Naive thymus-derived CD4-positive, alpha-beta T cell (primary cell): ENCODE measurements at regions of chr17 and their contacts with region 1.

Region 1: GRCh38 chr17:18038861-18039534 is at the starts of genes ATPAF2 and GID4:
- DNase-seq: peak; percentile 99 to 100 (median 100)
- ATAC-seq: peak; percentile 96
- H3K4me3 ChIP-seq: peak within 1 kb of the TSS; percentile 79
- H3K4me3 Mint-ChIP-seq: peak within 1 kb of the TSS; percentile 88 to 100 (median 98)
- H3K27ac ChIP-seq: peak within 1 kb of the TSS; percentile 88
- H3K27ac Mint-ChIP-seq: peak within 1 kb of the TSS; percentile 87 to 99 (median 97)
- H3K4me1 ChIP-seq: peaks cover 23 to 30% of the 10 kb centered on the region in 2 donors
- H3K4me1 Mint-ChIP-seq: peaks cover 42 to 70% (median 53%) of the 10 kb centered on the region in 7 donors
- H3K27me3 ChIP-seq: no peaks in the 10 kb centered on the region
- H3K27me3 Mint-ChIP-seq: no peaks in the 10 kb centered on the region
- total RNA-seq, gene ATPAF2: 26.3 to 36.7 (median 32.5) TPM
- total RNA-seq, gene GID4: 6.0 to 11.4 (median 10.0) TPM

Region 2: DNA sequence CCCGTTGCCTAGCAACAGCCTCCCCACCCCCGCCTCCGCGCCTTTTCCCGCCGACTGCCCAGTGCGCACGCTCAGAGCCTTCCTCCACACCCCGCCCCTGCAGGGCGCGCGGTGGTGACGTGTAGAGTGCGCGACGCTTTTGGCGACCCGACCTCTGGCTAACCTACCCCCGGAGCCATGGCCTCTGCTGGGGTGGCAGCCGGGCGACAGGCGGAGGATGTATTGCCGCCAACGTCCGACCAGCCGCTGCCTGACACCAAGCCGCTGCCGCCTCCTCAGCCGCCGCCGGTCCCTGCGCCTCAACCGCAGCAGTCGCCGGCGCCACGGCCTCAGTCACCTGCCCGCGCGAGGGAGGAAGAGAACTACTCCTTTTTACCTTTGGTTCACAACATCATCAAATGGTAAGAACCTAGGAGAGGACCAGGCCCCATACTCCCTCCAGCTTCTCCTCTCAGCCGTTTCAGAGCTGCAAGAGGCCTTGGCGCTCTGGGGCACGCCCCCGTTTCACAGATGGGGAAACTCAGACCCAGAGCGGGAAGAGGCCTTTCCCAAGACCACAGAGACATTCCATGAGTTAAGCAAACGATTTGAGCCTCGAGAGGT is 562.0 kb before region 1 on chr17 and contains the start of gene MED9:
- CTCF ChIA-PET with region 1: no interaction called
- POLR2A ChIA-PET with region 1: no interaction called
- intact Hi-C with region 1: loop called in 1 of 2 experiments (anchors 1 kb)
- DNase-seq: peak; percentile 90 to 98 (median 94)
- ATAC-seq: peak; percentile 100
- H3K4me3 ChIP-seq: peak within 1 kb of the TSS; percentile 98
- H3K4me3 Mint-ChIP-seq: peak within 1 kb of the TSS; percentile 85 to 92 (median 92)
- H3K27ac ChIP-seq: peak within 1 kb of the TSS; percentile 87
- H3K27ac Mint-ChIP-seq: peak within 1 kb of the TSS; percentile 72 to 95 (median 92)
- H3K4me1 ChIP-seq: peaks cover 10 to 29% of the 10 kb centered on the region in 2 donors
- H3K4me1 Mint-ChIP-seq: peaks cover 20 to 58% (median 49%) of the 10 kb centered on the region in 7 donors
- H3K27me3 ChIP-seq: no peaks in the 10 kb centered on the region
- H3K27me3 Mint-ChIP-seq: peaks cover 0 to 11% (median 0%) of the 10 kb centered on the region in 5 donors
- total RNA-seq, gene MED9: 14.0 to 24.1 (median 17.2) TPM

Region 3: DNA sequence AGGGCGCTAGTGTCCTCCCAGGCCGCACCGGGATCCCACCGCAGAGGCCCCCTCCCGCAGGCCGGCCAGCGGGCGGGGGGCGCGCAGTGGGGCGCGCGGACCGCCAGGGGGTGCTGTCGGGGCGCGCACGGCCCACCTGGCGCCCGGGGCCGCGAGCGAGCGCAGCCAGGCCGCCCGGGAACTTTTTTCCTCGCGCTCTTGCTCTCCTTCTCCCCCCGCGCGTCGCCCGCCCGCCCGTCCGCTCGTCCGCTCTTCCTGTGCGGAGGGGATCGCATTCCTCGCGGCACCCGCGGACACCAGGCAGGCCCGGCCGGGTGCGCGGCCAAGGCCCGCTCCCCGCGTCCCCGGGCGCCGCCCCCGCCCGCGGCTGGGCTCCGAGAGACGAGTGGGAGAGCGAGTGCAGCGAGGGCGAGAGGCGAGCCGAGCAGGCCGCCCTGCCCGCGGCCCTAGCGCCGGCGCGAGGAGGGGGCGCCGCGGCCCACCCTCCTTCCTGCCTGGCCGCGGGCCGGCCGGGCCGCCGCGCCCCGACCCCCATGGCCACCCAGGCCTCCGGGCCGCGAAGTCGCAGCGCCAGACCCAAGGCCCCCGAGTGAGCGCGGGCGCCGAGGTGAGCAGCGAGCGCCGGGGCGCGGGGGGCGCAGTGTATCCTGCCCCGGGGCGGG is 357.7 kb before region 1 on chr17 and contains the start of gene RAI1:
- CTCF ChIA-PET with region 1: interaction called, 8 read pairs
- POLR2A ChIA-PET with region 1: interaction called, 3 read pairs
- intact Hi-C with region 1: loop called in 1 of 2 experiments (anchors 1 kb)
- DNase-seq: peak; percentile 64 to 87 (median 79)
- ATAC-seq: peak; percentile 82
- H3K4me3 ChIP-seq: peak within 1 kb of the TSS; percentile 62
- H3K4me3 Mint-ChIP-seq: peak within 1 kb of the TSS; percentile 84 to 92 (median 89)
- H3K27ac ChIP-seq: peak within 1 kb of the TSS; percentile 93
- H3K27ac Mint-ChIP-seq: peak within 1 kb of the TSS in 7 of 9 donors; percentile 59 to 90 (median 77)
- H3K4me1 ChIP-seq: peaks cover 7 to 17% of the 10 kb centered on the region in 2 donors
- H3K4me1 Mint-ChIP-seq: peaks cover 14 to 42% (median 37%) of the 10 kb centered on the region in 7 donors
- H3K27me3 ChIP-seq: no peaks in the 10 kb centered on the region
- H3K27me3 Mint-ChIP-seq: peaks cover 0 to 16% (median 0%) of the 10 kb centered on the region in 5 donors
- total RNA-seq, gene RAI1: 20.1 to 46.2 (median 23.6) TPM

Region 4: DNA sequence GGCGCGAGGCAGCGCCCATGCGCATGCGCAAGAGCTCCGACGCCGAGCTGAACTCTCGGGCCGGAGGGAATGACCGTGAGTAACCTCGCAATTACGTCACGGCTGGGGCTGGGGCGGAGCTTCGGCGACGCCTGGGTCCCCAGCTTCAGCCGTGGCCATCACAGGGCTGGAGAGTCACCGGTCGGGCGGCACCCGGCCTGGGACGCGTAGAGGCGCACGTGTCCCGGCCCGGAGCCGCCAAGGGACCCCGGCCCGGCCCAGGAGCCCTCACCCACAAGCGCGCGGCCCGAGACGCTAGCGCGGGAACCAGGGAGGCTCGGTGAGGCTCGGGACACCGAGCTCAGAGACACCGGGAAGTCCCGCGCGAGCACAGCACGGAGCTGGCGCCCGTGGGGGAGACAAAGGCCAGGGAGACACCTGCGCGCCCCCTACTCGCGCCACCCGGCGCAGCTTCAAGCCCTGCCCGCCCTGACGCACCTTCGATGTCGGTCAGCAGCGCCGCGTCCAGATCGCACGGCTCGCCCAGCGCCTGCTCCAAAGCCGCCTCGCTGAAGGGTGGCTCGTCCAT is 202.7 kb before region 1 on chr17:
- CTCF ChIA-PET with region 1: no interaction called
- POLR2A ChIA-PET with region 1: interaction called, 3 read pairs
- intact Hi-C with region 1: loop called in 1 of 2 experiments (anchors 1 kb)
- DNase-seq: peak; percentile 93 to 99 (median 97)
- ATAC-seq: peak; percentile 85
- H3K4me3 ChIP-seq: peak overlapping the region; percentile 86
- H3K4me3 Mint-ChIP-seq: peak overlapping the region; percentile 85 to 95 (median 90)
- H3K27ac ChIP-seq: peak overlapping the region; percentile 99
- H3K27ac Mint-ChIP-seq: peak overlapping the region; percentile 94 to 99 (median 98)
- H3K4me1 ChIP-seq: peaks cover 18 to 60% of the 10 kb centered on the region in 2 donors
- H3K4me1 Mint-ChIP-seq: peaks cover 46 to 79% (median 75%) of the 10 kb centered on the region in 7 donors
- H3K27me3 ChIP-seq: no peaks in the 10 kb centered on the region
- H3K27me3 Mint-ChIP-seq: no peaks in the 10 kb centered on the region

Region 5: DNA sequence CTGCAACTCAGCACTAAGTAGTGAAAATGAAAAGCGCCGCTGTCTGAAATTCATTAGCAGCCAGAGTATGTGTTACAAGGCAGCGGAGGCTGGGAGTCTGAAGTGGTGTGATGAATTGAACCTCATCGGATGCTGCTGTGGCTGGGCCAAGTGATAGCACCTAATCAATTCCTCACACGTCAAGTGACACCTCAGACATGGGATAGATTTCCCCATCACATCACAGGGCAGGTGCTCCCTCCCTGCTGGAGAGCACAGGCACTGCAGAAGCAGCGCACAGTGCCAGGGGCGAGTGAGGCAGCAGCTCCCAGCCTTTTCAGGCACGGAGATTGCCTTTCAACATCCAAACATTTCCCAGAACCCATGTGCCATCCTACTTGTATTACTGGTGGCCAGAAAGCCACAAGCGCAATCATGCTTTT is 34.1 kb before region 1 on chr17:
- CTCF ChIA-PET with region 1: no interaction called
- POLR2A ChIA-PET with region 1: no interaction called
- intact Hi-C with region 1: no loop called
- DNase-seq: no peak
- ATAC-seq: no peak
- H3K4me3 ChIP-seq: no peak overlapping the region
- H3K4me3 Mint-ChIP-seq: no peak overlapping the region
- H3K27ac ChIP-seq: no peak overlapping the region
- H3K27ac Mint-ChIP-seq: no peak overlapping the region
- H3K4me1 ChIP-seq: no peaks in the 10 kb centered on the region
- H3K4me1 Mint-ChIP-seq: peaks cover 0 to 5% (median 0%) of the 10 kb centered on the region in 7 donors
- H3K27me3 ChIP-seq: no peaks in the 10 kb centered on the region
- H3K27me3 Mint-ChIP-seq: no peaks in the 10 kb centered on the region

Region 6: DNA sequence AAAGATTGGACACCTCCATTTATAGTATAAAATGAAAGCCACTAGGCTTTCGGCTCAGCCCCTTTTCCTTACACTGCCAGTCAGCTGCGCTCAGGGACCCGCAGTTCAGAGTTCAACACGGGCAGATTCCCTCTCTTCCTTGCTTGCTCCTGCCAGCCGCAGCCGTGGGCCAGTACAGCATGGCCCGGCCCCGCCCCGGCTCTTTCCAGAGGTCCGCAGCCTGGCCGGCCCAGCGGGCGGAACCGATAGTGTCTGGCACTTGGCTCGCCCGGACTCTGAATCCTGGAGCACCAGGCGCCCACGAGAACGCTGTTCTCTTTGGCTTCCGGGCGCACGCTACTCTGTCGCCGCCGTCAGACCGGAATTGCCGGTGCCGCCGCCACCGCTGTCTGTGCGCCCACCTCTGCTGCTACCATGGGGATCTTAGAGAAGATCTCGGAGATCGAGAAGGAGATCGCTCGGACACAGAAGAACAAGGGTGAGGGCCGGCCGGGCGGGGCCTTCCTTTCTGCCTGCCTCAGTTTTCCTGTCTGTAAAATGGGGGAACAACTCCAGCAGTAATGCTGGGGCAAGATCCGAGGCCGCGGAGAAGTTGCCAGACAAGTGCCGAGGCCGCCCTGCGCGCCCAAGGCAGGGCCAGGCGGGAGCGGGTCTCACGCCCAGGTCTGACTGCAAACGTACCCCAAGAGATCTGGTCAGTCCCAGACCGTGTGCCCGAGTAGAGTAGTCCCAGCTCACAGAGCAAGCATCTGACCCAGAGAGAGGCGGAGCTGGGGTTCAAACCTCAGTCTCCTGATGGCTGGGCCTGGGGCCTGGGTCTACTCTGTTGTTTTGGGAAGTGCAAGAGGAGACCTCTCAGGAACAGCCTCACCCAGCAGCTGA is 48.9 kb after region 1 on chr17 and contains the start of gene DRG2:
- CTCF ChIA-PET with region 1: no interaction called
- POLR2A ChIA-PET with region 1: no interaction called
- intact Hi-C with region 1: loop called (anchors 1 to 2 kb)
- DNase-seq: peak; percentile 79 to 94 (median 85)
- ATAC-seq: peak; percentile 98
- H3K4me3 ChIP-seq: peak within 1 kb of the TSS; percentile 84
- H3K4me3 Mint-ChIP-seq: peak within 1 kb of the TSS; percentile 97 to 100 (median 98)
- H3K27ac ChIP-seq: peak within 1 kb of the TSS; percentile 85
- H3K27ac Mint-ChIP-seq: peak within 1 kb of the TSS; percentile 96 to 99 (median 98)
- H3K4me1 ChIP-seq: peaks cover 9 to 12% of the 10 kb centered on the region in 2 donors
- H3K4me1 Mint-ChIP-seq: peaks cover 19 to 35% (median 27%) of the 10 kb centered on the region in 7 donors
- H3K27me3 ChIP-seq: no peaks in the 10 kb centered on the region
- H3K27me3 Mint-ChIP-seq: no peaks in the 10 kb centered on the region
- total RNA-seq, gene DRG2: 39.6 to 54.7 (median 48.8) TPM

Region 7: DNA sequence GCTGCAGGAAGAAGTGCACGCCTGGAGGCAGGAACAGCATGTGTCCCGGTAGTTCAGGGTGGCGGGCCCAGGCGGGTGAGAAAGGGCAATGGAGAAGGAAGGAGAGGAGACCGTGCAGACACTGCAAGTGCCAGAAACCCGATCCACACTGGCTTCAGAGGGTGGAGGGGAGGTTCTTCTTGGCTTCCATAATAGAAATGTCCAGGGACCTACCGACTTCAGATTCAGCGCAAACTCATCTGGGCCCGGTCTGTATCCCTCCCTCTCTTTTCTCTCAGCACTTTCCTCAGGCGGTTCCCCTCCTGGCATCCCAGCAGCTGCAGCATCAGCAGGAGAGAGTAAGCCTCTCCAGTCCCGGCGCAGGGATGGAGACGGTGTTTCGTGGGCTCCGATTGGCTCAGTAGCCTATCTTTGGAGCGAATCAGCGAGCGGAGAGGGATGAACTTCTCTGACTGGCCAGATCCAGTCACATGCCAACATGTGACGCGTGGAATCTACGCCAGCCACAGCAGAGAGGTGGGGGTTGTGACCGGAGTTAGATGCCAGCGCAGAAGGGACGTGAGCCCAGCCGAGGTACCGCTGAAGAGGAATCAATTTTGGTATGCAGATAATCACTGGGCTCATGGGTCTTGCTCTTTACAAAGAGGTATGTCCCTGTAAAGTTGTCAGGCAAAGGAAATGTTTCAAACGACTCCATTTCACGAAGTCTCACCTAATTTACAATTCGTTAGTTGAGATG is 817.0 kb after region 1 on chr17:
- CTCF ChIA-PET with region 1: no interaction called
- POLR2A ChIA-PET with region 1: no interaction called
- intact Hi-C with region 1: loop called in 1 of 2 experiments (anchors 5 kb)
- DNase-seq: peak; percentile 57 to 93 (median 85)
- ATAC-seq: peak; percentile 89
- H3K4me3 ChIP-seq: peak overlapping the region; percentile 76
- H3K4me3 Mint-ChIP-seq: peak overlapping the region; percentile 79 to 99 (median 96)
- H3K27ac ChIP-seq: peak overlapping the region; percentile 79
- H3K27ac Mint-ChIP-seq: peak overlapping the region; percentile 77 to 98 (median 92)
- H3K4me1 ChIP-seq: peaks cover 18 to 28% of the 10 kb centered on the region in 2 donors
- H3K4me1 Mint-ChIP-seq: peaks cover 29 to 52% (median 44%) of the 10 kb centered on the region in 7 donors
- H3K27me3 ChIP-seq: no peaks in the 10 kb centered on the region
- H3K27me3 Mint-ChIP-seq: no peaks in the 10 kb centered on the region